Activated B cell treated with CpG ODN at 0.5 μM for 24 hours (primary cell): ENCODE measurements at regions of chr17 and their contacts with region 1.

Region 1: DNA sequence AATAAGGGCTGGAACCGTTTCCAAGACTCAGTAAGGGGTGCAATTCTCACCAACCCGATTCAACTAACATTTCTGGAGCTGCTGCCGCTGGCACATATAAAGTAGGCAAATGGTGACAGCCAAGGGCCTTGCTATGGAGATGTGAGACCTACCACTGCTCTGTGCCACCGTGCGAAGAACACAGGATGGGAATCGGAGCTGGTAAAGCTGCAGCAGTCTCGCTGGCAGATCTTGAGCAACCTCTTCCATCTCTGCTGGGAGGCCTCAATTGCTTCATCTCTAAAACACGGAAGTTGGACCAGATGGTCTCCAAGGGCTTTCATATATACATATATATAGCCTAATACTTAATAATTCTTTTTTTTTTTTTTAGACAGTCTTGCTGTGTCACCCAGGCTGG is 128.9 kb upstream of the RCVRN start:
- DNase-seq: no peak
- ATAC-seq: peak; percentile 62
- H3K4me3 Mint-ChIP-seq: peak overlapping the region; percentile 62
- H3K27ac Mint-ChIP-seq: peak overlapping the region; percentile 69
- H3K4me1 Mint-ChIP-seq: peaks cover 27% of the 10 kb centered on the region
- H3K27me3 Mint-ChIP-seq: peaks cover 3% of the 10 kb centered on the region
- CTCF ChIP-seq: no peak

Region 2: DNA sequence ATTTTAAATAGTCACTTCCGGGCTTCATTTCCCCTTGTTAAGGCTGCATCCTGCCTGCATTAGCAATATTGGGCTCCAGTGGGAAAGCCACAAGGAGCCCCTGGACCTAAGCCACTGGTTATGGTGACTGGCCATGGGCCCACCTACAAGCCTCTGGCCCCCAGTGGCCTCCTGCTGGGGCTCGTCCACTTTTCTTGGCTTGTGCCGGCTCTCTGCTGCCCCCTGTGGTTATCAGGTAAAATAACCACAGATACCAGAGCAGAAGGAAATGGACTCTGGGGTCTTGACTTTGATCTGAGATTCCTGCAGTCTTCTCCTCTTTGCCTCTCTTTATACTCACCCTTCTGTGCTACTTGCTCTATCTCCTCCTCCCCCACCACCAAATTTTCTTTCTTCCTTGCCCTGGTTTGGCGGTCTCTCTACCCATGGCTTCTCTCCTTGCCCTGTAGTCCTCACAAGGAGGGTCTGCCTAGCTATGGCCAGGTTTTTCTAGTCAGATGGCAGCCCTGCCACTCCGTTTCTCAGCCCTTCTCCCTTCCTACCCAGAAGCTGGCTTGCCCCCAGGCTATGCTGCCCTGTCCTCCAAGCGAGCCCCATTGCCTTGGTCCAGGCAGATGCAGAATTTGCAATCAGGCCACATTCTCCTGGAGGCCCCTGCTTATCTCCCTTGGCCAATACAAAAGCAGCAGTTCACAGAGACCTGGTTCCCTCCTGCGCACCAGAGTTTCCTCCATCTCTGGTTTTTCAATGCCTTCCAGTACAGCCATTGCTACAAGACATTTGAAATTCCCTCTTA is 46.0 kb before region 1 on chr17:
- CTCF ChIA-PET with region 1: interaction called, 3 read pairs
- POLR2A ChIA-PET with region 1: no interaction called
- intact Hi-C with region 1: loop called (anchors 5 kb)
- DNase-seq: no peak
- ATAC-seq: peak; percentile 62
- H3K4me3 Mint-ChIP-seq: no peak overlapping the region
- H3K27ac Mint-ChIP-seq: no peak overlapping the region
- H3K4me1 Mint-ChIP-seq: peaks cover 10% of the 10 kb centered on the region
- H3K27me3 Mint-ChIP-seq: no peaks in the 10 kb centered on the region
- CTCF ChIP-seq: peak; percentile 72

Region 3: DNA sequence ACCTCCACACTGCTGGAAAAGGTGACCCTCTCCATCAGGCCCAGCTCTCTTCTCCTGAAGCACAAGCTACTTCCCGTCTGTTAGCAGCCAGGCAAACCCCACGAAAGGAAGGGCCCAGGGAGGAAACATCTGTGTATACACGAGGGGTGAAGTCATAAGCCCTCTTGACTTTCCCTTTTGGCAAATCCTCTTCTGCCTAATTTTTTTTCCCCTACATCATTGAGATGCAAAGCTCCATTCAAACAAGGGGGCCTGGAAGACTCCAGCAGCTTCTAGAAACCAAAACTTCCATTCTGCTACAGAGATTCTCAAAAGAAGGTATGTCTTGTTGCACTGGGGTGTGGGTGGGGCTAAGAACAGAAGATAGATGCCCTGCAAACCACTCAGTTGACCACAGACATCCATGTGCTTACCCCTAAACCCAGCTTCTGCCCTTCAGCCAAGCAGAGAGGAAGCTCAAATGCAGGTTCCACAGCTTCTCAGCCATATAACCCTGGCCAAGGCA is 16.7 kb after region 1 on chr17:
- CTCF ChIA-PET with region 1: interaction called, 3 read pairs
- POLR2A ChIA-PET with region 1: interaction called, 15 read pairs
- intact Hi-C with region 1: no loop called
- DNase-seq: no peak
- ATAC-seq: peak; percentile 7
- H3K4me3 Mint-ChIP-seq: peak overlapping the region; percentile 68
- H3K27ac Mint-ChIP-seq: peak overlapping the region; percentile 78
- H3K4me1 Mint-ChIP-seq: peaks cover 61% of the 10 kb centered on the region
- H3K27me3 Mint-ChIP-seq: no peaks in the 10 kb centered on the region
- CTCF ChIP-seq: no peak